H1 (cell line): ENCODE measurements at regions of chr5 and their contacts with region 1.

Region 1: GRCh38 chr5:32709781-32710549 is 1.2 kb upstream of the NPR3 start:
- DNase-seq: peak in 1 of 2 experiments; percentile 78
- H3K4me3 ChIP-seq: peak overlapping the region; percentile 13 to 62 (median 50)
- H3K27ac ChIP-seq: no peak overlapping the region
- H3K4me1 ChIP-seq: peaks cover 0 to 27% (median 12%) of the 10 kb centered on the region in 4 experiments; a peak in 5 of 7 replicates
- H3K27me3 ChIP-seq: peaks cover 49 to 68% (median 63%) of the 10 kb centered on the region in 4 experiments
- CTCF ChIP-seq: peak; percentile 56 to 69 (median 58)
- EP300 ChIP-seq: no peak
- POLR2A ChIP-seq: no peak
- RAD21 ChIP-seq: peak in 1 of 2 experiments; percentile 54; a peak in 3 of 4 replicates

Region 2: GRCh38 chr5:32852535-32852934 is 142.6 kb after region 1 on chr5:
- CTCF ChIA-PET with region 1: interaction called, 15 read pairs
- POLR2A ChIA-PET with region 1: no interaction called
- DNase-seq: peak; percentile 33 to 52
- H3K4me3 ChIP-seq: no peak overlapping the region
- H3K27ac ChIP-seq: no peak overlapping the region
- H3K4me1 ChIP-seq: peaks cover 0 to 4% (median 0%) of the 10 kb centered on the region in 4 experiments; a peak in 2 of 7 replicates
- H3K27me3 ChIP-seq: no peaks in the 10 kb centered on the region; a peak in 1 of 7 replicates
- CTCF ChIP-seq: peak in 2 of 3 experiments; percentile 41 to 63; a peak in 3 of 4 replicates
- EP300 ChIP-seq: no peak
- POLR2A ChIP-seq: no peak
- RAD21 ChIP-seq: peak; percentile 66 to 75

Region 3: DNA sequence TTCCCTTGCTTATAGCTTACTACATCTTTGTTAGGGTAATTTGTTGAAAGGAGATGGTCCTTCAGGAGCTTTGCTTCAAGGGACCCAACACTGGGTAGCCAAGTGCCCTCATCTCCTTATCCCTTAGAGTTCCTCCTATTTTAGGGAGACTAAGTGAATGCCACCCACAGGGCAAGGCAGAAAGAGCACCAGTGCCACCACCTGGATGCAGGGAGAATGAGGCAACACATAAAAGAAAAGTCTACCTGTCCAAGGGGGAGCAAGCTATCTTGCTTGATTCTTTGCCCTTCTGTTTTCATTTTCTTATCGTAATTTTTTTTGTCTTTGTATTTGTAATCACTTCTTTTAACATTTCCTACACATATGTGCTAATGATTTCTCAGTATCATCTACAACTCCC is 206.7 kb after region 1 on chr5:
- CTCF ChIA-PET with region 1: interaction called, 10 read pairs
- POLR2A ChIA-PET with region 1: interaction called, 4 read pairs
- DNase-seq: peak; percentile 29 to 57
- H3K4me3 ChIP-seq: no peak overlapping the region
- H3K27ac ChIP-seq: no peak overlapping the region
- H3K4me1 ChIP-seq: no peaks in the 10 kb centered on the region
- H3K27me3 ChIP-seq: no peaks in the 10 kb centered on the region
- CTCF ChIP-seq: peak; percentile 70 to 75 (median 73)
- EP300 ChIP-seq: no peak
- POLR2A ChIP-seq: no peak
- RAD21 ChIP-seq: peak; percentile 89 to 93